ENCODE measurements at regions of chr20 and their contacts with region 1.

Region 1: GRCh38 chr20:16517946-16518783 is 55.1 kb downstream of the KIF16B start:
- DNase-seq: peak; percentile 60
- ATAC-seq: peak; percentile 97
- H3K4me3 ChIP-seq: no peak overlapping the region
- H3K27ac ChIP-seq: no peak overlapping the region
- H3K4me1 ChIP-seq: no peaks in the 10 kb centered on the region
- H3K27me3 ChIP-seq: no peaks in the 10 kb centered on the region
- CTCF ChIP-seq: peak; percentile 71
- EP300 ChIP-seq: no peak
- POLR2A ChIP-seq: no peak
- RAD21 ChIP-seq: peak; percentile 82

Region 2: DNA sequence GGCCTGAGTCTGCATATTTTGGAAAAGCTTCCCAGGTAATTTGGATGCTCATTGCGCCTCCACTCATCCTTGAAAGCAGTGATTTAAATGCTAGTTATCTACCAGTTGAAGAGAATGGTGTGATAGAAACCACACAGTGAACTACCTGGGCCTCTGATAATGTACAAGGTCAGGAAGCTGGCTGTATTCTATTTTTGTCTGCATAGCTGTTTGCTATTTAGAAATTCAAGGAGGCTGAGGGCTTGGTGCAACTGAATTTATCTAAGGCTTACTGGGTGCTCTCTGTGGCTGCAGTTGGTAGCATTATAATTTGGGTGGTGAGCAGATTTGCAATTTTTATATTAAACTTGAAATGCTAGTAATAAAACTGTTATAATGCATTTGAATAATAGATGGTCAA is 190.6 kb before region 1 on chr20:
- CTCF ChIA-PET with region 1: no interaction called
- POLR2A ChIA-PET with region 1: no interaction called
- in situ Hi-C with region 1: no loop called
- intact Hi-C with region 1: no loop called
- DNase-seq: no peak
- ATAC-seq: no peak
- H3K4me3 ChIP-seq: no peak overlapping the region
- H3K27ac ChIP-seq: no peak overlapping the region
- H3K4me1 ChIP-seq: no peaks in the 10 kb centered on the region
- H3K27me3 ChIP-seq: no peaks in the 10 kb centered on the region
- CTCF ChIP-seq: no peak
- EP300 ChIP-seq: no peak
- POLR2A ChIP-seq: no peak
- RAD21 ChIP-seq: no peak

Region 3: DNA sequence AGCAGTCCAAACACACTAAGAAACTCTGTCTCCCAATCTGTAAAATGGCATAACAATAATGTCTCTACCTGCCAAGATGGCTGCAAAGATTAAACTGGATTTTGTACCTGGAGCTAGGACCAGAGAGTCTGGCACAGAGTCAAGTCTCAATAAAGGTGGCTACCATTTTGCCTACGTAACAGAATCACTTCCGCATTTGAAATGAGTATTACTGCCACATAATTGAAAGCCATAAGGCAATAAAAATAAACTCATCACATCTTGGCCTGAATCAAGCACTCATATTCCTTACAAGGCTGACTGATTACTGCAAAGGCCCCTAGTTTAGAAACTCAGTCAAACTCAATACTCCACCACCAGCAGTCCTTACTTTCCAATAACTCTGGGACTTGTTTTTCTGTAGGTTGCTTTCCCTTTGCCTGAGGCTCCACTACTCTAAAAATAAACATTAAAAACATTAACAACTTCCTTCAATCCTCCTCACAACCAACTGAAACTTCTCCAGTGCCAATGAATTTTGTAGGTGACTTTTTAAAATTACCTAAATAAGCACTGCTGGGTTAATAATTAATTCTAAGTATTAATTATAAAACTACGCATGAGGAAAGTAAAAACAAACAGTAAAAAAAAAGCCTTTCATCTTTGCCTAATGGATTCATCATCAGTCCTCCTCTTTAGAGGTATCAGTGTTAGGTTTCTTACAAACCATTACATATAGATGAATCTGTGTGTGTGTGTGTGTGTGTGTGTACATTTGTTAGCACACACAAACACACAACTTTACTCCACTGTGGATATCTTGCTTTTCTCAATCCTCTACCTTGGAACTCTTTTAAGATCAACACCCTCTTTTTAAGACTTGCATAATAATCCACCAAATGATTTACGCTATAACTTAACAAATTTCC is 51.3 kb after region 1 on chr20:
- CTCF ChIA-PET with region 1: no interaction called
- POLR2A ChIA-PET with region 1: no interaction called
- in situ Hi-C with region 1: no loop called
- intact Hi-C with region 1: no loop called
- DNase-seq: no peak
- ATAC-seq: no peak
- H3K4me3 ChIP-seq: no peak overlapping the region
- H3K27ac ChIP-seq: no peak overlapping the region
- H3K4me1 ChIP-seq: peaks cover 48% of the 10 kb centered on the region
- H3K27me3 ChIP-seq: no peaks in the 10 kb centered on the region; a peak in 1 of 5 replicates
- CTCF ChIP-seq: no peak
- EP300 ChIP-seq: no peak
- POLR2A ChIP-seq: no peak
- RAD21 ChIP-seq: no peak

Region 4: GRCh38 chr20:16621435-16622141 is 103.4 kb after region 1 on chr20:
- CTCF ChIA-PET with region 1: no interaction called
- POLR2A ChIA-PET with region 1: no interaction called
- in situ Hi-C with region 1: loop called (anchors 10 kb)
- intact Hi-C with region 1: no loop called
- DNase-seq: no peak
- ATAC-seq: peak; percentile 30; the same call in 2 of the 3 replicates
- H3K4me3 ChIP-seq: no peak overlapping the region
- H3K27ac ChIP-seq: no peak overlapping the region
- H3K4me1 ChIP-seq: no peaks in the 10 kb centered on the region
- H3K27me3 ChIP-seq: no peaks in the 10 kb centered on the region; a peak in 2 of 5 replicates
- CTCF ChIP-seq: peak; percentile 35
- EP300 ChIP-seq: no peak
- POLR2A ChIP-seq: no peak
- RAD21 ChIP-seq: no peak